Activated CD4-positive, alpha-beta memory T cell treated with anti-CD3 and anti-CD28 coated beads for 36 hours (primary cell): ENCODE measurements at regions of chr11 and their contacts with region 1.

Region 1: DNA sequence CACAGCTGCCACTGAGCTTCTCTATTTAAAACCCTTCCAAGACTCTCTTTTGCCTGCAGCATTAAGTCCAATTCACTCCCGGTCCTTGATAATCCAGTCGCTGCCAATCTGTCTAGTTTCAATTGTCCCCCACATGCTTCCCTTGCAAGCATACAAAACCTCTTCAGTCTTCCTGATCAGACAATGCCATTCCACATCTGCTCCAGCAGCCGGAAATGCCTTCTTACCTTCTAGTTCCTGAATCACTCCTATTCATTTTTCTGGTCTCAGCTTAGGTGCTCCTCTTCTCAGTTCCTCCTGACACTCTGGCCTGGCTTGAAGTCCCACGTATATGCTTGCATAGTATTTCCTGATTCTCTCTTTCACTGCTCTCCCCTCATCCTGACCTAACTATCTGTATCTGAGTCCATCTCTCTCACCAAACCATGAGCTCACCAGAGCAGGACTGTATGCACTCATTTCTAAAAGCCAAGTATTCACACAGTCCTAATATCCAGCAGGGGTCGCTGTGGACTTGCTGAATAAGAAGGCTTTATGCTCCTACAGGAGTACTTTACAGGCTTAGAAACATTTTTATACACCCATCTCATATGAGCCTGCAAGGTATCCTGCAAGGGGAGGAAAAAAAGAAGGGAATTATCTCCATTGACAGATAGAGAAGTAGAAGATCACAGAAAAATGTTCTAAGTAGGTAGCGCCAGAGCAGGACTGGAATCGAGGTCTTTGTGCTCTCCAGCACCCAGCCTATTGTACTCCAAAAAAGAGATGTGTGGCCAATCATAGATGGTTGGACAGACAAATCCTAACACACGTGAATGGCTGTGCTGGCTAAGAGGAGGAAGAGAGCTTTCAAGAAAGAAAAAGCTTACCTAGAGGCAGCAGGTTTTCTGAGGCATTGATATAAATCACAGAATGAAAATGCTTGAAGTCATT is 19.2 kb downstream of the XRRA1 start:
- DNase-seq: peak; percentile 69
- H3K4me3 Mint-ChIP-seq: no peak overlapping the region
- H3K27ac Mint-ChIP-seq: no peak overlapping the region
- H3K4me1 Mint-ChIP-seq: peaks cover 14% of the 10 kb centered on the region
- H3K27me3 Mint-ChIP-seq: no peaks in the 10 kb centered on the region

Region 2: GRCh38 chr11:74941308-74941891 is 11.7 kb after region 1 on chr11:
- CTCF ChIA-PET with region 1: interaction called, 20 read pairs
- POLR2A ChIA-PET with region 1: interaction called, 3 read pairs
- intact Hi-C with region 1: no loop called
- DNase-seq: no peak
- H3K4me3 Mint-ChIP-seq: no peak overlapping the region
- H3K27ac Mint-ChIP-seq: no peak overlapping the region
- H3K4me1 Mint-ChIP-seq: peaks cover 17% of the 10 kb centered on the region
- H3K27me3 Mint-ChIP-seq: no peaks in the 10 kb centered on the region

Region 3: DNA sequence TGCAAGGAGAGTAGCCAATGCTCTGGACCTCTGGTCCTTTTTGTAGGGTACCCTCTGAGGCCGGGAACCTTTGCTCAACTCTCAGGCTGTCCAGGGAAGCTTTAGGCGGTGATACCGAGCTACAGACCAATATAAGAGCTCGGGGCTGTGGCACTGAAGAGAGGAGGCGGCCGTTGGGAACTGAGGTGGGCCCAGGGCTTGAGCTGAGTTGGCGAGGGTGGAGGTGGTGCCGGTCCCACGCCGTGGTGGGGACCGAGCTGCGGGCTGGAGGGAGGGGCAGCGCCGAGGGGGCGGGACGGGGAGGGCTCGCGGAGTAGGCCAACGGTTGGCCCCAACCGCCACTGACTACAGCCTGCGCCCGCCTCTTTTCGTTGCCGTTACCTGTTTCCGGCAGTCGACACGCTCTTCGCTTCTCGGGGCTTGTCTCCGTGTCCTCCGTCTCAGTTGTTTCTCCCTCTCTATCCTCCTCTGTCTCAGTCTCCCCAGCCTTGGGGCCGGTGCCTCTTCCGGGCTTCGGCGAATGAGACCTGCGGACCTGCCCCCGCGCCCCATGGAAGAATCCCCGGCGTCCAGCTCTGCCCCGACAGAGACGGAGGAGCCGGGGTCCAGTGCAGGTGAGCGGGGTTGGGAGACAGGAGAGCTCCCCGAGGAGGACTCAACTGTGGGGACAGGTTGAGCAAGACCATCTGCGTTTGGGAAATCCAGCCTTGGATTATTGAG is 59.0 kb after region 1 on chr11 and contains the start of gene NEU3:
- CTCF ChIA-PET with region 1: interaction called, 8 read pairs
- POLR2A ChIA-PET with region 1: no interaction called
- intact Hi-C with region 1: loop called (anchors 2 kb)
- DNase-seq: peak; percentile 91
- H3K4me3 Mint-ChIP-seq: peak within 1 kb of the TSS; percentile 91
- H3K27ac Mint-ChIP-seq: peak within 1 kb of the TSS; percentile 70
- H3K4me1 Mint-ChIP-seq: peaks cover 22% of the 10 kb centered on the region
- H3K27me3 Mint-ChIP-seq: no peaks in the 10 kb centered on the region
- total RNA-seq, gene NEU3: 13.6 to 14.3 TPM

Region 4: DNA sequence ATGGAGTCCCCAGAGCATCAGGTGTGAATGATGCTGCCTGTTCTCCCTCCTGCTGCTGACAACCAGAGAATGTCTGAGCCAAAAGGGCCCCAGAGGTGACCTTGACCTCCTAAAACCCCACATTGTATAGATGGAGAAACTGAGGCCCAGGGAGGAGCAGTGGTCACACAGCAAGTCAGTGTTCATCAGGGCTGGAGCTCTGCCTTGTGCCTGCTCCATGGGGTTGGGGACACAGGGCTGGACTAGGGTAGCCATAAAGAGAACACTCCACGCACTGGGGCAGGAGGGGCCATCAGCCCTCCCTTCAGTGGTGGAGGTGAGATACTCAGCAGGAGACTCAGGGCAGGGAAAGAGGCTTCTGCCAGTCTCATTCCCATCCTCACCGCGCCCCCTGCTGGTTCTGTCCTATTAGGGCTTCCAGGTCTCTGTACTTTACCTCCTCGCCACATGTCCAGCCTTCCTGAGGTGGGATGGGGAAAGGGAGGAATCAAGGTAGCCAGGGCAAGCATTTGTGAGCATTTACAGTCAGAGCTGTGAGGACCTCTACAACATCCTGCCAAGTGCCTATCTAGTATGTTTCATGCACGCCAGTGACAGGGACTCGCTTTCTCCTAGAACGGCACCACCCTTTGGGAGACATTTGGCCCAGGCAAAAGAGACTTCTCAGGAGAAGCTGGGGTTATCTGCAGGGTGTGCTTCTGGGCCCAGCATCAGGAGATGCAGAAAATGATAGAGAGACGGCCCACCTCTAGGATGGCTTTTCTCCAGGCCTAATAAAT is 102.3 kb after region 1 on chr11:
- CTCF ChIA-PET with region 1: interaction called, 36 read pairs
- POLR2A ChIA-PET with region 1: no interaction called
- intact Hi-C with region 1: loop called (anchors 1 kb)
- DNase-seq: peak; percentile 75
- H3K4me3 Mint-ChIP-seq: no peak overlapping the region
- H3K27ac Mint-ChIP-seq: no peak overlapping the region
- H3K4me1 Mint-ChIP-seq: peaks cover 3% of the 10 kb centered on the region
- H3K27me3 Mint-ChIP-seq: no peaks in the 10 kb centered on the region

Region 5: GRCh38 chr11:75047191-75047590 is 117.5 kb after region 1 on chr11:
- CTCF ChIA-PET with region 1: no interaction called
- POLR2A ChIA-PET with region 1: no interaction called
- intact Hi-C with region 1: no loop called
- DNase-seq: no peak
- H3K4me3 Mint-ChIP-seq: no peak overlapping the region
- H3K27ac Mint-ChIP-seq: no peak overlapping the region
- H3K4me1 Mint-ChIP-seq: no peaks in the 10 kb centered on the region
- H3K27me3 Mint-ChIP-seq: no peaks in the 10 kb centered on the region

Region 6: GRCh38 chr11:75204685-75205563 is 275.2 kb after region 1 on chr11:
- CTCF ChIA-PET with region 1: interaction called, 43 read pairs
- POLR2A ChIA-PET with region 1: no interaction called
- intact Hi-C with region 1: loop called (anchors 2 kb)
- DNase-seq: peak; percentile 90
- H3K4me3 Mint-ChIP-seq: no peak overlapping the region
- H3K27ac Mint-ChIP-seq: no peak overlapping the region
- H3K4me1 Mint-ChIP-seq: no peaks in the 10 kb centered on the region
- H3K27me3 Mint-ChIP-seq: no peaks in the 10 kb centered on the region

Region 7: DNA sequence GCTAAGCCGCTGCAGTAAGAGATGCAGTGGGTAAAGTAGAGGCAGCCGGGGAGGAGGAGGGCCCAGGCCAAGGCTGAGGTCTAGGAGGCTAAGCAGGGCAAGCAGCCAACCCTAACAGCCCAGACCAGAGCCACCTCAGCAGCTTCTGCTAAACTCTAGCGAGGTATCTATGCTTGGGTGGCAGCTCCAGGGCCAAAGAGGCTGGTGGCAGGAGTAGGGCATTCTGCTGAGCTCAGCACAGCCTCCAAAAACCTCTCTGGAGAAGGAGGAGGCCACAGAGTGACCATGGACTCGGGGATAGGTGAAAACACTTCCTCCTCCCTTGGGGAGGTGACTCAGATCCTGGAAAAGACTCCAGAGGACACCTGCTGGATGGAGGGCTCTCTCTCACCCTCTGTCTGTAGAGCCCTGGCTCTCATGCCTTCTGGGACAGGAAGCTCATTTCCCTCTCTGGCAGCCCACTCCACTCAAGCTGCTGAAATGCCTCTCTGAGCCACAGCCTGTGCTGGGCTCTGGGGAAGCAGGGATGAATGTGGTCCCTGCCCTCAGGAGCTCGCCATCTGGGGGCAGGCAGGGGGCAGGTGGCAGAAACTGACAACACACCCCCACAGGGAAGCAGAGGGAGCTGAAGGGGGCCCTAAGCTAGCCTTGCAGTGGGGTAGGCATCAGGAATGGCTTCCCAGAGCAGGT is 294.4 kb after region 1 on chr11:
- CTCF ChIA-PET with region 1: no interaction called
- POLR2A ChIA-PET with region 1: no interaction called
- intact Hi-C with region 1: no loop called
- DNase-seq: no peak
- H3K4me3 Mint-ChIP-seq: no peak overlapping the region
- H3K27ac Mint-ChIP-seq: no peak overlapping the region
- H3K4me1 Mint-ChIP-seq: no peaks in the 10 kb centered on the region
- H3K27me3 Mint-ChIP-seq: peaks cover 1% of the 10 kb centered on the region

Region 8: GRCh38 chr11:75248690-75249268 is 319.1 kb after region 1 on chr11:
- CTCF ChIA-PET with region 1: interaction called, 58 read pairs
- POLR2A ChIA-PET with region 1: no interaction called
- intact Hi-C with region 1: loop called (anchors 2 kb)
- DNase-seq: peak; percentile 91
- H3K4me3 Mint-ChIP-seq: no peak overlapping the region
- H3K27ac Mint-ChIP-seq: peak overlapping the region; percentile 1
- H3K4me1 Mint-ChIP-seq: no peaks in the 10 kb centered on the region
- H3K27me3 Mint-ChIP-seq: peaks cover 7% of the 10 kb centered on the region